ENCODE measurements at regions of chr15 and their contacts with region 1.

Region 1: GRCh38 chr15:42056934-42057779 is 36.3 kb upstream of the PLA2G4E start:
- DNase-seq: peak in 13 of 14 experiments; percentile 15 to 82 (median 35)
- ATAC-seq: peak; percentile 81
- H3K4me3 ChIP-seq: peak overlapping the region; percentile 36
- H3K4me3 Mint-ChIP-seq: peak overlapping the region; percentile 61
- H3K27ac ChIP-seq: no peak overlapping the region
- H3K27ac Mint-ChIP-seq: peak overlapping the region; percentile 31
- H3K4me1 ChIP-seq: peaks cover 22% of the 10 kb centered on the region
- H3K4me1 Mint-ChIP-seq: peaks cover 14% of the 10 kb centered on the region
- H3K27me3 ChIP-seq: peaks cover 19 to 23% of the 10 kb centered on the region in 2 experiments
- H3K27me3 Mint-ChIP-seq: peaks cover 39% of the 10 kb centered on the region
- CTCF ChIP-seq: peak; percentile 31

Region 2: DNA sequence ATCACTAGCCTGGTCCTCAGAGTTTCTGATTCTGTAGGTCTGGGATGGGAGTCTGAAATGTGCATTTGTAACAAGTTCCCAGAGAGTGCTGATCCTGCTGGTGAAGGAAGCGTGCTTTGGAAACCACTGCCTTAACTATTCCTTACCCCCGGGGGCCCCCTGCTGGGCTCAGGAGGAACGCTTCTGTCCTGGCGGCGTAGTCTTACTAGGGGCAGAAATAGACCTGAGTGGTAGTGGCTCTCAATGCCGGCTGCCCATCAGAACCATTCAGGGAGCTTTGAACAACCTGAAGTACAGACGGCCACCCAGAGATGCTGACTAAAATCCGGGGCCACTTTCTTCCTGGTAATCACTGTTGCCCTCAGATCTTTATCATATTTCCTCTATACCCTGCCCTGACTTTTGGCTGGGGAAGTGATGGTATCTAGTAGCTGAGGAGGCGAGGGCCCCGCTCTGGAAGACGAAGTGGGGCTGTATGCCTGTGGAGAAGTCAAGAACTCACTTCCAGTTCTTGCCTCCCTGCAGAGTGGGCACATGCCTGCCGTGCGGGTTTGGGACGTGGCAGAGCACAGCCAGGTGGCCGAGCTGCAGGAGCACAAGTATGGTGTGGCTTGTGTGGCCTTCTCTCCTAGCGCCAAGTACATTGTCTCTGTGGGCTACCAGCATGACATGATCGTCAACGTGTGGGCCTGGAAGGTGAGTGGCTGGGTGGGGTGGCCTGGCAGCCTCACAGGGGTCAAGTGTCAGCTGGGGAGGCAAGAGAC is 245.5 kb before region 1 on chr15:
- CTCF ChIA-PET with region 1: no interaction called
- POLR2A ChIA-PET with region 1: no interaction called
- intact Hi-C with region 1: loop called in 1 of 2 experiments (anchors 5 kb)
- DNase-seq: peak; percentile 62 to 88 (median 70)
- ATAC-seq: peak; percentile 97
- H3K4me3 ChIP-seq: no peak overlapping the region
- H3K4me3 Mint-ChIP-seq: no peak overlapping the region
- H3K27ac ChIP-seq: no peak overlapping the region
- H3K27ac Mint-ChIP-seq: peak overlapping the region; percentile 43
- H3K4me1 ChIP-seq: peaks cover 19% of the 10 kb centered on the region
- H3K4me1 Mint-ChIP-seq: peaks cover 12% of the 10 kb centered on the region
- H3K27me3 ChIP-seq: no peaks in the 10 kb centered on the region
- H3K27me3 Mint-ChIP-seq: no peaks in the 10 kb centered on the region
- CTCF ChIP-seq: peak; percentile 92

Region 3: GRCh38 chr15:41928637-41929620 is 128.2 kb before region 1 on chr15:
- CTCF ChIA-PET with region 1: no interaction called
- POLR2A ChIA-PET with region 1: no interaction called
- intact Hi-C with region 1: loop called in 1 of 2 experiments (anchors 10 kb)
- DNase-seq: peak in 1 of 14 experiments; percentile 19
- ATAC-seq: no peak
- H3K4me3 ChIP-seq: no peak overlapping the region
- H3K4me3 Mint-ChIP-seq: no peak overlapping the region
- H3K27ac ChIP-seq: no peak overlapping the region
- H3K27ac Mint-ChIP-seq: peak overlapping the region; percentile 8
- H3K4me1 ChIP-seq: peaks cover 35% of the 10 kb centered on the region
- H3K4me1 Mint-ChIP-seq: peaks cover 31% of the 10 kb centered on the region
- H3K27me3 ChIP-seq: no peaks in the 10 kb centered on the region
- H3K27me3 Mint-ChIP-seq: no peaks in the 10 kb centered on the region
- CTCF ChIP-seq: no peak